ENCODE measurements at regions of chr21 and their contacts with region 1.

Region 1: GRCh38 chr21:43645136-43645891 is 14.0 kb downstream of the HSF2BP start:
- DNase-seq: peak; percentile 55
- H3K4me3 Mint-ChIP-seq: peak overlapping the region; percentile 44
- H3K27ac Mint-ChIP-seq: no peak overlapping the region
- H3K4me1 Mint-ChIP-seq: peaks cover 22% of the 10 kb centered on the region
- H3K27me3 Mint-ChIP-seq: peaks cover 15% of the 10 kb centered on the region

Region 2: GRCh38 chr21:43611598-43612369 is 33.5 kb before region 1 on chr21:
- CTCF ChIA-PET with region 1: interaction called, 15 read pairs
- DNase-seq: no peak
- H3K4me3 Mint-ChIP-seq: no peak overlapping the region
- H3K27ac Mint-ChIP-seq: no peak overlapping the region
- H3K4me1 Mint-ChIP-seq: peaks cover 9% of the 10 kb centered on the region
- H3K27me3 Mint-ChIP-seq: peaks cover 4% of the 10 kb centered on the region

Region 3: DNA sequence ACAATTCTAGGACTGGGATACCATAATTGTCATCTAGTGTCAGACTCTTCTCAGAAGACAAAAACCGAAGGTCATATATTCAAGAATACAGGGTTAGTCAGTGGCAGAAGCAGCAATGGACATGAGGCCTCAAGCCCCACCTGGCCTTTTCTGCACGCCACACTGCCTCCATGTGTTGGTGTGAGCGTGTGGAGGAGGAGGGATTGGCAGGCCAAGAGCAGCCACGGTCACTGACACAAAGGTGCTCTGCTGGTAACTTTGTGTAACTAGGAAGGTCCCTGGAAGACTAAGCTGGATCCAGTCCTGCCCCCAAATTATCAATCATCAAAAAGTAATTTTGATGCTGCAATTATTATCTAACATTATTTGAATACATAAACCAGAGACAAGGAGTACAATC is 21.0 kb before region 1 on chr21:
- CTCF ChIA-PET with region 1: no interaction called
- DNase-seq: no peak
- H3K4me3 Mint-ChIP-seq: no peak overlapping the region
- H3K27ac Mint-ChIP-seq: no peak overlapping the region
- H3K4me1 Mint-ChIP-seq: peaks cover 3% of the 10 kb centered on the region
- H3K27me3 Mint-ChIP-seq: peaks cover 14% of the 10 kb centered on the region

Measured in activated naive CD4-positive, alpha-beta T cell treated with anti-CD3 and anti-CD28 coated beads, Interleukin-2, amount 10 ng/mL, durations not matched to agents 7 days and 5 days (primary cell).